ENCODE measurements at regions of chr16 and their contacts with region 1.

Region 1: DNA sequence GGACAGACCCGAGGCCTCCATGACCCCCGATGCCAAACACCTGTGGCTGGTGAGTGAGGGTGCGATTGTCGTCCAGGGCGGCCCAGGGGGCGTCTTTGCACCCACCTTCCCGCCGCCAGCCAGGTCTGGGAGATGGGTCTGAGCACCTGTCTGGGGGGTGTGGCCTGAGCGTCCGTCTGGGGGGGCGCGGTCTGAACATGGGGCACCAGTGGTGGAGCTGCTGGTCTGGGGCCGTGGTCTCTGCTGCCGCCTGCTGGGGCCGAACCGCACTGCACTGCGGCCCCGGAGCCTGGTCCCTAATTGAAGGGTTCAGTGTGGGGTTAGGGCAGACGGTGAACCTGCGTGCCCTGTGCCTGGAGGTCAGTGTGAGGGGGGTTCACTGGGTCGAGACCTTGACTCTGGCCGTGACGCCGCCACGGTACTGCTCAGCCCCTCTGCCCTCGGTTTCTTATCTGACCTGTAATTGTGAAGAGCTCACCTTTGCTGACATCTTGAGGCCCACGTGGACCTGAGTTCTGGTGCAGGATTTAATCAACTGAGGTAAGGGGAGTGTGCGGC is 12.6 kb upstream of the TCF25 start:
- DNase-seq: peak; percentile 83
- H3K4me3 Mint-ChIP-seq: no peak overlapping the region
- H3K27ac Mint-ChIP-seq: peak overlapping the region; percentile 47
- H3K4me1 Mint-ChIP-seq: peaks cover 25% of the 10 kb centered on the region
- H3K27me3 Mint-ChIP-seq: no peaks in the 10 kb centered on the region

Region 2: DNA sequence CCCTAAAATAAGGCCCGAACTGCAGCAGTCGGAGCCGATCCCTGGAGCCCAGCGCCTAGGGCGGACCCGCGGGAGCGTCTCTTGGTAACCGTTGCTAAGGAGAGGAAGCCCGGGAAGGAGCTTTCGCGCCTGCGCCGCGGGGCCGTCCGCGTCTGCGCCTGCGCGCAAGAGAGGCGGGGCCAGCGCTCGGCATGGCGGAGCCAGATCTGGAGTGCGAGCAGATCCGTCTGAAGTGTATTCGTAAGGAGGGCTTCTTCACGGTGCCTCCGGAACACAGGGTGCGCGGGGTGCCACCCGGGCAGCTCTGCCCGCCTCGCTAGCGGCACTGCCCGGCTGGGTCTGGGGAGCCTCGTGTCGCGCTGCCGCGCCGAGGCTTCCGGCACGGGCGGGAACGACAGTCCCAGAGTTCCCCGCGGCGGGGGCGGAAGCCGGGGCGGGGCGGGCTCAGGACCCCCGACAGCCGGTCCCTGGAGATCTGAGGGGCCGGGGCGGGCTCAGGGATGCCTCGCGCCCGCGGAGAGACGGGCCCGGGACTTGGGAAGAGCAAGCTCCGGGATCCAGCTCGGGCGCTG is 174.2 kb before region 1 on chr16 and contains the start of gene CDK10:
- CTCF ChIA-PET with region 1: interaction called, 14 read pairs
- POLR2A ChIA-PET with region 1: no interaction called
- intact Hi-C with region 1: no loop called
- DNase-seq: peak; percentile 94
- H3K4me3 Mint-ChIP-seq: peak within 1 kb of the TSS; percentile 92
- H3K27ac Mint-ChIP-seq: peak within 1 kb of the TSS; percentile 90
- H3K4me1 Mint-ChIP-seq: peaks cover 15% of the 10 kb centered on the region
- H3K27me3 Mint-ChIP-seq: no peaks in the 10 kb centered on the region
- total RNA-seq, gene CDK10: 90.0 to 92.4 TPM

Region 3: GRCh38 chr16:89706507-89707263 is 154.1 kb before region 1 on chr16:
- CTCF ChIA-PET with region 1: interaction called, 81 read pairs
- POLR2A ChIA-PET with region 1: interaction called, 5 read pairs
- intact Hi-C with region 1: loop called (anchors 2 kb)
- DNase-seq: no peak
- H3K4me3 Mint-ChIP-seq: no peak overlapping the region
- H3K27ac Mint-ChIP-seq: no peak overlapping the region
- H3K4me1 Mint-ChIP-seq: peaks cover 9% of the 10 kb centered on the region
- H3K27me3 Mint-ChIP-seq: no peaks in the 10 kb centered on the region

Region 4: GRCh38 chr16:89720813-89721545 is 139.8 kb before region 1 on chr16 and contains the starts of genes VPS9D1 and ZNF276:
- CTCF ChIA-PET with region 1: interaction called, 4 read pairs
- POLR2A ChIA-PET with region 1: no interaction called
- intact Hi-C with region 1: loop called (anchors 5 kb)
- DNase-seq: peak; percentile 87
- H3K4me3 Mint-ChIP-seq: peak within 1 kb of the TSS; percentile 87
- H3K27ac Mint-ChIP-seq: peak within 1 kb of the TSS; percentile 88
- H3K4me1 Mint-ChIP-seq: peaks cover 38% of the 10 kb centered on the region
- H3K27me3 Mint-ChIP-seq: no peaks in the 10 kb centered on the region
- total RNA-seq, gene VPS9D1: 2.9 to 3.2 TPM
- total RNA-seq, gene ZNF276: 22.1 to 25.6 TPM

Region 5: DNA sequence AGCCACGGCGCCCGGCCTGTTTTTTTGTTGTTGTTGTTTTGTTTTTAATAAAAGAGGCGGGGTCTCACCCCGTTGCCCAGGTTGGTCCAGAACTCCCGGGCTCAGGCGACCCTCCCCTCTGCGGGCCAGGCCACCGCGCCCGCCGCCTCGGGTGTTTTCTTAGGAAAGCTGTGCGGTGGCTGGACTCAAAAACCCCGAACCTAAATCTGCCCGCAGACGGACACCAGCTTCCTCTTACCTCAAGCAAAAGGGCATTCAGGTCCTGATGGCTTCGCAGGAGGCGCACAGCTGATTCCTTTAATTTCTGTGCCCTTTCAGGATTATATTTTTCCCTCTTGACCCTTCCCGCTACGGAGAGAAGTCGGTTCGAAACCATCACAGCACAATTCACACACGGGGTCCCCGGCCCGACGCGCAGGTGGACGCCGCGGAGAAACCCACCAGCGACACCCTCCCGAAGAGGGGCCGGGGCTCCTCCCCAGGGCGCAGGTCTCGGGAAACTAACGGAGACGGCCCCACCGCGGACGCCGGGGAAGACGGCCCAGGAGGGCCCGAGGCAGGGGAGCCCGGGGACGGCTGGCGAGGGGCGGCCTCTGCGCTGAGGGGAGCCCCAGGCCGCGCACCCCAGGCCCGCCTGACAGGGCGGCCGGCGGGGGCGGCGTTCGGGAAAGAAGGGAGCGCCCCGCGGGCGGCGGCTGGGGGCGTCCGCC is 45.0 kb before region 1 on chr16:
- CTCF ChIA-PET with region 1: interaction called, 11 read pairs
- POLR2A ChIA-PET with region 1: no interaction called
- intact Hi-C with region 1: loop called (anchors 2 kb)
- DNase-seq: peak; percentile 25
- H3K4me3 Mint-ChIP-seq: peak overlapping the region; percentile 85
- H3K27ac Mint-ChIP-seq: peak overlapping the region; percentile 18
- H3K4me1 Mint-ChIP-seq: peaks cover 37% of the 10 kb centered on the region
- H3K27me3 Mint-ChIP-seq: no peaks in the 10 kb centered on the region

Region 6: GRCh38 chr16:89873972-89874689 is 13.3 kb after region 1 on chr16:
- CTCF ChIA-PET with region 1: interaction called, 23 read pairs
- POLR2A ChIA-PET with region 1: interaction called, 21 read pairs
- intact Hi-C with region 1: loop called (anchors 1 kb)
- DNase-seq: peak; percentile 97
- H3K4me3 Mint-ChIP-seq: peak overlapping the region; percentile 85
- H3K27ac Mint-ChIP-seq: peak overlapping the region; percentile 98
- H3K4me1 Mint-ChIP-seq: peaks cover 14% of the 10 kb centered on the region
- H3K27me3 Mint-ChIP-seq: no peaks in the 10 kb centered on the region